Caco-2 (cell line): ENCODE measurements at regions of chr10 and their contacts with region 1.

Region 1: GRCh38 chr10:42638055-42638820 is at the start of gene ZNF33B:
- DNase-seq: peak; percentile 98 to 99
- H3K4me3 ChIP-seq: peak within 1 kb of the TSS; percentile 48
- H3K4me3 Mint-ChIP-seq: peak within 1 kb of the TSS; percentile 87
- H3K27ac Mint-ChIP-seq: peak within 1 kb of the TSS; percentile 91
- H3K4me1 ChIP-seq: peaks cover 27% of the 10 kb centered on the region
- H3K4me1 Mint-ChIP-seq: peaks cover 19% of the 10 kb centered on the region
- H3K27me3 ChIP-seq: no peaks in the 10 kb centered on the region
- H3K27me3 Mint-ChIP-seq: no peaks in the 10 kb centered on the region
- CTCF ChIP-seq: no peak
- total RNA-seq, gene ZNF33B: 43.2 and 43.3 TPM in 2 replicates

Region 2: GRCh38 chr10:42552493-42553407 is 85.5 kb before region 1 on chr10:
- CTCF ChIA-PET with region 1: no interaction called
- POLR2A ChIA-PET with region 1: no interaction called
- intact Hi-C with region 1: loop called (anchors 2 kb)
- DNase-seq: peak; percentile 97 to 98
- H3K4me3 ChIP-seq: peak overlapping the region; percentile 89
- H3K4me3 Mint-ChIP-seq: peak overlapping the region; percentile 99
- H3K27ac Mint-ChIP-seq: peak overlapping the region; percentile 89
- H3K4me1 ChIP-seq: peaks cover 5% of the 10 kb centered on the region; the same call in 1 of the 2 replicates
- H3K4me1 Mint-ChIP-seq: no peaks in the 10 kb centered on the region
- H3K27me3 ChIP-seq: no peaks in the 10 kb centered on the region
- H3K27me3 Mint-ChIP-seq: no peaks in the 10 kb centered on the region
- CTCF ChIP-seq: no peak

Region 3: GRCh38 chr10:42652860-42653259 is 14.6 kb after region 1 on chr10:
- CTCF ChIA-PET with region 1: interaction called, 9 read pairs
- POLR2A ChIA-PET with region 1: interaction called, 11 read pairs
- intact Hi-C with region 1: loop called (anchors 1 kb)
- DNase-seq: peak in 1 of 2 experiments; percentile 66
- H3K4me3 ChIP-seq: no peak overlapping the region
- H3K4me3 Mint-ChIP-seq: peak overlapping the region; percentile 48
- H3K27ac Mint-ChIP-seq: peak overlapping the region; percentile 12
- H3K4me1 ChIP-seq: peaks cover 39% of the 10 kb centered on the region
- H3K4me1 Mint-ChIP-seq: peaks cover 41% of the 10 kb centered on the region
- H3K27me3 ChIP-seq: no peaks in the 10 kb centered on the region
- H3K27me3 Mint-ChIP-seq: no peaks in the 10 kb centered on the region
- CTCF ChIP-seq: no peak

Region 4: DNA sequence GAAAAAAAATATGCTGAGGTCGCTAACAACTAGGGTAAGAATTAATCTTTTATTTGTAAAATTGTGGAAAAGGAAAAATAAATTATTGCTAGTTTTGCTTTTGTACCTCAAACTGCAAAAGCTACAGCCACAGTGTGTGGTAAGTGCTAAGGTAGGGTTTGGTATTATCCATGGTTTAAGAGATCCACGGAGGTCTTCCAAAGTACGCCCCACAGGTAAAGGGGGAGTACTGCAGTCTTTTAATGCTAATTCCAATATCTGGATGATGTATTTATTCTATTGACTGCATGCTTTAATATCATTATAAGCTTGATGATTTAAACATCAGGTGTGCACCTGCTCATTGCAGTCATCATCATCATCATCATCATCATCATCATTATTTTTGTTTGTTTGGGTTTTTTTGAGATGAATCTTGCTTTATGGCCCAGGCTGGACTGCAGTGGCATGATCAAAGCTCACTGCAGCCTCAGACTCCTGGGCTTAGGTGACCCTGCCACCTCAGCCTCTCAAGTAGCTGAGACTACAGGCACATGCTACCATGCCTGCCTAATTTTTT is 106.0 kb after region 1 on chr10:
- CTCF ChIA-PET with region 1: no interaction called
- POLR2A ChIA-PET with region 1: no interaction called
- intact Hi-C with region 1: loop called (anchors 1 kb)
- DNase-seq: no peak
- H3K4me3 ChIP-seq: no peak overlapping the region
- H3K4me3 Mint-ChIP-seq: no peak overlapping the region
- H3K27ac Mint-ChIP-seq: no peak overlapping the region
- H3K4me1 ChIP-seq: no peaks in the 10 kb centered on the region
- H3K4me1 Mint-ChIP-seq: no peaks in the 10 kb centered on the region
- H3K27me3 ChIP-seq: no peaks in the 10 kb centered on the region
- H3K27me3 Mint-ChIP-seq: no peaks in the 10 kb centered on the region
- CTCF ChIP-seq: peak; percentile 8 to 17

Region 5: GRCh38 chr10:42782446-42783180 is 144.4 kb after region 1 on chr10 and contains the start of gene BMS1:
- CTCF ChIA-PET with region 1: no interaction called
- POLR2A ChIA-PET with region 1: interaction called, 8 read pairs
- intact Hi-C with region 1: loop called (anchors 1 kb)
- DNase-seq: peak; percentile 97
- H3K4me3 ChIP-seq: peak within 1 kb of the TSS; percentile 54
- H3K4me3 Mint-ChIP-seq: peak within 1 kb of the TSS; percentile 90
- H3K27ac Mint-ChIP-seq: peak within 1 kb of the TSS; percentile 96
- H3K4me1 ChIP-seq: no peaks in the 10 kb centered on the region
- H3K4me1 Mint-ChIP-seq: peaks cover 9% of the 10 kb centered on the region
- H3K27me3 ChIP-seq: no peaks in the 10 kb centered on the region
- H3K27me3 Mint-ChIP-seq: peaks cover 1% of the 10 kb centered on the region
- CTCF ChIP-seq: no peak
- total RNA-seq, gene BMS1: 36.3 and 38.2 TPM in 2 replicates